ENCODE measurements at regions of chr15 and their contacts with region 1.

Region 1: GRCh38 chr15:75130597-75131268 is 70.9 kb upstream of the C15orf39 start:
- DNase-seq: peak; percentile 31
- H3K4me3 Mint-ChIP-seq: peak overlapping the region; percentile 0
- H3K27ac Mint-ChIP-seq: no peak overlapping the region
- H3K4me1 Mint-ChIP-seq: peaks cover 12% of the 10 kb centered on the region
- H3K27me3 Mint-ChIP-seq: peaks cover 11% of the 10 kb centered on the region

Region 2: DNA sequence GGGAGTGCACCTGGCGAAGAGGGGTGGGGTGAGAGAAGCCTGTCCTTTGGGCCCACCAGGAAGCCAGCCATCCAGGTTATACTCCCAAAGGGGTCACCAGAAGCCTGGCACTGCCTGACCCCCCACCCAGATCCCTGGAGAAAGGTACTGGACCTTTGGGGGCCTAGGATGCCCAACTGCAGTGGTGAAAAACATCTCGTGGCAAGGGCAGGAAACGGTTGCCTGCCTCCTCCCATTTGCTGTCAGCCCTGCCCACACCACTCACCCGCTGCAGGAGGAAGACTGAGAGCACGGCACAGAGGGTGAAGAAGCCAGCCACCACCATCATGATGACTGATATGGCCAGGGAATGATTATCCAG is 285.5 kb before region 1 on chr15:
- CTCF ChIA-PET with region 1: no interaction called
- intact Hi-C with region 1: no loop called
- DNase-seq: peak; percentile 78
- H3K4me3 Mint-ChIP-seq: peak overlapping the region; percentile 3
- H3K27ac Mint-ChIP-seq: peak overlapping the region; percentile 89
- H3K4me1 Mint-ChIP-seq: peaks cover 44% of the 10 kb centered on the region
- H3K27me3 Mint-ChIP-seq: no peaks in the 10 kb centered on the region

Region 3: GRCh38 chr15:75069301-75069925 is 61.3 kb before region 1 on chr15:
- CTCF ChIA-PET with region 1: no interaction called
- intact Hi-C with region 1: loop called (anchors 1 kb)
- DNase-seq: peak; percentile 39
- H3K4me3 Mint-ChIP-seq: no peak overlapping the region
- H3K27ac Mint-ChIP-seq: no peak overlapping the region
- H3K4me1 Mint-ChIP-seq: peaks cover 36% of the 10 kb centered on the region
- H3K27me3 Mint-ChIP-seq: peaks cover 19% of the 10 kb centered on the region

Region 4: DNA sequence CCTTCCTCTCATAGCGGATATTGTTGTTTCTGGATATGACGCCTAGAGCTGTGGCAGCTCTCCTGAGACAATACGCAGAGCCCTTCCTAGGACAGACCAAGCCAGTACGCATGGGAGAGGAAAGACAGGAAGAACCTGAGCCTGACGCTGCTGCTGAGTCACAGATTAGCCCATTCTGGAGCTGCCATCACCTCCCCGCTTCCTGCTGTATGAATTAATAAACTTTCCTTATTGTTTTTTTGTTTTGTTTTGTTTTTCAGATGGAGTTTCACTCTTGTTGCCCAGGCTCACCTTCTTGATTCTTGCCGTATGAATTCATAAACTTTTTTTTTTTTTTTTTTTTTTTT is 40.4 kb before region 1 on chr15:
- CTCF ChIA-PET with region 1: no interaction called
- intact Hi-C with region 1: loop called (anchors 2 kb)
- DNase-seq: no peak
- H3K4me3 Mint-ChIP-seq: no peak overlapping the region
- H3K27ac Mint-ChIP-seq: no peak overlapping the region
- H3K4me1 Mint-ChIP-seq: peaks cover 5% of the 10 kb centered on the region
- H3K27me3 Mint-ChIP-seq: no peaks in the 10 kb centered on the region

Region 5: GRCh38 chr15:75104804-75105535 is 25.8 kb before region 1 on chr15:
- CTCF ChIA-PET with region 1: interaction called, 4 read pairs
- intact Hi-C with region 1: loop called (anchors 1 kb)
- DNase-seq: peak; percentile 44
- H3K4me3 Mint-ChIP-seq: no peak overlapping the region
- H3K27ac Mint-ChIP-seq: no peak overlapping the region
- H3K4me1 Mint-ChIP-seq: peaks cover 24% of the 10 kb centered on the region
- H3K27me3 Mint-ChIP-seq: peaks cover 10% of the 10 kb centered on the region